Gastrocnemius medialis (tissue), 4 donors: ENCODE measurements at regions of chr9 and their contacts with region 1.

Region 1: GRCh38 chr9:15510789-15511575 is at the start of gene PSIP1:
- DNase-seq: peak; percentile 32 to 52
- ATAC-seq: peak; percentile 92
- H3K4me3 ChIP-seq: peak within 1 kb of the TSS; percentile 74 to 92 (median 86)
- H3K27ac ChIP-seq: peak within 1 kb of the TSS; percentile 75 to 92 (median 89)
- H3K4me1 ChIP-seq: peaks cover 5 to 18% of the 10 kb centered on the region in 2 donors
- H3K27me3 ChIP-seq: no peaks in the 10 kb centered on the region
- CTCF ChIP-seq: peak in 4 of 5 experiments; percentile 6 to 31 (median 21)
- POLR2A ChIP-seq: peak; percentile 36 to 46
- total RNA-seq, gene PSIP1: 11.7 to 21.3 (median 12.5) TPM

Region 2: DNA sequence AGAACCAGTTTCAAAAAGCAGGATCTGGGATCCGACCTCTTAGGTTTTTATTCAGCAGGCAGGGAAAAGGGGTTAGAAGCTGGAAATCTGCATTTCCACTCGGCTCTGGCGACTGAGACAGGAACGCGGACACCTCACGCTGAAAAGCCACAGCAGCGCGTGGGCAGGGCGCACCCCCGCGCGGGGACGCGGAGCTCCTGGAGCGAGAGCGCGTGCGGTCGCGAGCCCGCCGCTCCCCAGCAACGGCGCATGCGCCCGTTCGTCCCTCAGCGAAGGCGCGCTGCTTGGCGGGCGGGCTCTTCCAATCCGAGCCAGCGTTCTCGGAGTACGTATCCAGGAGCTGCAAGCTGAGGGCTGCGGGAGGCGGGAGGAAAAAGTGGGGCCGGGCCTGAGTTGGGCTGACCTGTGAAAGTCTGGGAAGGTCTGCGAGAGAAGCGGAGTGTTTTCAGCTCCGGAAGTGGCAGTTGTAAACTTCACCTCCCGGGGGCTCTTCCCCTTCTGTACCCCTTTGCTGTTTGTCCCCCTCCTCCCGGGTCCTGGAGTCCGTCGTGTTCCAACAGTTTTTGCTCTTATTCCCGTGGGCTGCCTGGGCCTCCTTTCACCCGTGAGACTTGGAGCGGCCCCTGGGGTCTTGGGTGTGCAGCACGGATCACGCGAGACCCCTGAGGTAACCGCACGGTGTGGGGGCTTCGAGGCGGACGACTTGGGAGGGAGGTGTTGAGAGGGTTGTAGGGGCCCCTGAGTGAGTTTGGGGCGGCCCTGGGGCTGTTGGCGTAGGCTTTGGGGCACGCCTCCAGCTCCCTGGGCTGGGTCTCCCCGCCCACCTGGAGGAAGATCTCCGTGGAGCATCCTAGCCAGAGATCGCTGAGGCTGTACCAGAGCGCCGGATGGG is 41.9 kb after region 1 on chr9 and contains the start of gene CCDC171:
- in situ Hi-C with region 1: no loop called
- intact Hi-C with region 1: loop called (anchors 1 kb)
- DNase-seq: peak; percentile 81 to 86
- ATAC-seq: peak; percentile 95 to 96
- H3K4me3 ChIP-seq: peak within 1 kb of the TSS; percentile 69 to 90 (median 83)
- H3K27ac ChIP-seq: peak within 1 kb of the TSS; percentile 68 to 80 (median 76)
- H3K4me1 ChIP-seq: no peaks in the 10 kb centered on the region
- H3K27me3 ChIP-seq: no peaks in the 10 kb centered on the region
- CTCF ChIP-seq: no peak
- POLR2A ChIP-seq: peak; percentile 31 to 46
- total RNA-seq, gene CCDC171: 0.61 to 1.7 (median 1.3) TPM